ENCODE measurements at regions of chr10 and their contacts with region 1.

Region 1: GRCh38 chr10:20004087-20004523 is 187.9 kb downstream of the PLXDC2 start:
- DNase-seq: peak; percentile 24 to 73 (median 67)
- ATAC-seq: peak; percentile 43 to 73 (median 56)
- H3K4me3 ChIP-seq: no peak overlapping the region
- H3K27ac ChIP-seq: peak overlapping the region; percentile 42 to 95 (median 62)
- H3K4me1 ChIP-seq: peaks cover 0 to 57% (median 27%) of the 10 kb centered on the region in 12 donors
- H3K27me3 ChIP-seq: no peaks in the 10 kb centered on the region
- CTCF ChIP-seq: no peak
- POLR2A ChIP-seq: no peak

Region 2: DNA sequence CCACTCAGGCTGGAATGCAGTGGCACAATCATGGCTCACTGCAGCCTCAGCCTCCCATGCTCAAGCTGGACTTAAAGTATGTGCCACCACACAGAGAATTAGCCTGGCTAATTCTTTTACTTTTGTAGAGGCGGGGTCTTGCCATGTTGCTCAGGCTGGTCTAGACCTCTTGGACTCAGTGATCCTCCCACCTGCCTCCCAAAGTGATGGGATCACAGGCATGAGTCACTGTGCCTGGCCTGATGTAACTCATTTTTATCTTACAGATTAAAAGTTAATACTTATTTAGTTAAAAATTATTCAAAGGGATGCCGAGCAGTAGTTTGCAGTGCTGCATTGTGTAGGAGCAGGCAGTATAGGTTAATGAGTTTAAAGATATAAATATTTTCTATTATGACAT is 200.4 kb before region 1 on chr10:
- intact Hi-C with region 1: no loop called
- DNase-seq: no peak
- ATAC-seq: no peak
- H3K4me3 ChIP-seq: no peak overlapping the region
- H3K27ac ChIP-seq: no peak overlapping the region
- H3K4me1 ChIP-seq: no peaks in the 10 kb centered on the region
- H3K27me3 ChIP-seq: no peaks in the 10 kb centered on the region
- CTCF ChIP-seq: no peak
- POLR2A ChIP-seq: no peak

Region 3: DNA sequence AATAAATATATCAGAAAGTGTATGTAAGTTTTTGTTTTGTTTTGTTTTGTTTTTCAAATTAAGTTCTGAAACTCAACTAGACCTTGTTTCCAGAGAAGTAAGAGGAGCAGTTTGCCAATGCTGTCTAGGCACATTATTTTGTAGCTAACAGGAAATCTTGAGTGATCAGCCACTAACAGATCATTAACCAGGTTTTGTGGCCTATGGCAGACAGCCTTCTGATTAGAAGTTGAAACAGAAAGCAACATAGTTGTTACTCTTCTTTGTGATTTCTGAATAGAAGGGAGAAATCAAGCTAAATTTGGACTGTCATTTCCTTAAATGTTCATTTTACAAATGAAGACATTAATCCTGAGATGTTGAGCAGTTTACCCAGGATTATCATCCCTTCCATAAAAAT is 45.3 kb before region 1 on chr10:
- intact Hi-C with region 1: loop called in 1 of 10 experiments (anchors 10 kb)
- DNase-seq: no peak
- ATAC-seq: no peak
- H3K4me3 ChIP-seq: no peak overlapping the region
- H3K27ac ChIP-seq: peak overlapping the region in 1 of 12 donors; percentile 36
- H3K4me1 ChIP-seq: peaks cover 0 to 36% (median 8%) of the 10 kb centered on the region in 12 donors
- H3K27me3 ChIP-seq: no peaks in the 10 kb centered on the region
- CTCF ChIP-seq: no peak
- POLR2A ChIP-seq: no peak